WTC11 (cell line): ENCODE measurements at regions of chr14 and their contacts with region 1.

Region 1: GRCh38 chr14:67571272-67571850 is 28.7 kb downstream of the PIGH start:
- DNase-seq: peak; percentile 72
- ATAC-seq: peak; percentile 85
- H3K4me3 Mint-ChIP-seq: no peak overlapping the region
- H3K27ac Mint-ChIP-seq: no peak overlapping the region
- H3K4me1 Mint-ChIP-seq: peaks cover 9% of the 10 kb centered on the region
- H3K27me3 Mint-ChIP-seq: no peaks in the 10 kb centered on the region
- CTCF ChIP-seq: peak; percentile 85

Region 2: DNA sequence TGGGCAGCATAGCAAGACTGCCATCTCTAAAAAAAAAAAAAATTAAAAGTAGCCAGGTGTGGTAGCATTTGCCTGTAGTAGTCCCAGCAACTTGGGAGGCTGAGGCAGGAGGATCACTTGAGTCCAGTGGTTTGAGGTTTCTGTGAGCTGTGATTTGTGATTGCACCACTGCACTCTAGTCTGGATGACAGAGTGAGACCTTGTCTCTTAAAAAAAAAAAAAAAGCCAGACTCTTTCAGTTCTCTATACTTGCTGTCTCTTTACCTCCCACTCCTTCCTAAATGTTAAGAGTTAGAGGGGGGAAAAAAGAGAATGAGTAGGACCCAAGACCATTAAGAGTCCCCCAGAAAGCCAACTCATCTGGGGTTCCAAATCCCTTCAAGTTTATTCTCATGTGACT is 193.4 kb before region 1 on chr14:
- CTCF ChIA-PET with region 1: no interaction called
- POLR2A ChIA-PET with region 1: no interaction called
- DNase-seq: no peak
- ATAC-seq: no peak
- H3K4me3 Mint-ChIP-seq: no peak overlapping the region
- H3K27ac Mint-ChIP-seq: no peak overlapping the region
- H3K4me1 Mint-ChIP-seq: no peaks in the 10 kb centered on the region
- H3K27me3 Mint-ChIP-seq: no peaks in the 10 kb centered on the region
- CTCF ChIP-seq: no peak

Region 3: GRCh38 chr14:67420102-67420830 is 151.1 kb before region 1 on chr14:
- CTCF ChIA-PET with region 1: interaction called, 30 read pairs
- POLR2A ChIA-PET with region 1: no interaction called
- DNase-seq: peak; percentile 85
- ATAC-seq: peak; percentile 93
- H3K4me3 Mint-ChIP-seq: no peak overlapping the region
- H3K27ac Mint-ChIP-seq: no peak overlapping the region
- H3K4me1 Mint-ChIP-seq: no peaks in the 10 kb centered on the region
- H3K27me3 Mint-ChIP-seq: no peaks in the 10 kb centered on the region; the same call in 1 of the 2 replicates
- CTCF ChIP-seq: peak; percentile 62; the same call in 1 of the 2 replicates

Region 4: GRCh38 chr14:67514650-67515385 is 56.5 kb before region 1 on chr14:
- CTCF ChIA-PET with region 1: interaction called, 27 read pairs
- POLR2A ChIA-PET with region 1: interaction called, 3 read pairs
- DNase-seq: peak; percentile 32
- ATAC-seq: peak; percentile 57
- H3K4me3 Mint-ChIP-seq: peak overlapping the region; percentile 80
- H3K27ac Mint-ChIP-seq: no peak overlapping the region
- H3K4me1 Mint-ChIP-seq: peaks cover 21% of the 10 kb centered on the region
- H3K27me3 Mint-ChIP-seq: peaks cover 77% of the 10 kb centered on the region
- CTCF ChIP-seq: no peak

Region 5: GRCh38 chr14:67541448-67542387 is 29.6 kb before region 1 on chr14:
- CTCF ChIA-PET with region 1: interaction called, 36 read pairs
- POLR2A ChIA-PET with region 1: interaction called, 6 read pairs
- DNase-seq: peak; percentile 67
- ATAC-seq: peak; percentile 91
- H3K4me3 Mint-ChIP-seq: peak overlapping the region; percentile 63
- H3K27ac Mint-ChIP-seq: peak overlapping the region; percentile 99
- H3K4me1 Mint-ChIP-seq: peaks cover 50% of the 10 kb centered on the region
- H3K27me3 Mint-ChIP-seq: no peaks in the 10 kb centered on the region
- CTCF ChIP-seq: no peak

Region 6: GRCh38 chr14:67557126-67557525 is 14.2 kb before region 1 on chr14:
- CTCF ChIA-PET with region 1: interaction called, 27 read pairs
- POLR2A ChIA-PET with region 1: no interaction called
- DNase-seq: no peak
- ATAC-seq: no peak; the same call in 1 of the 2 replicates
- H3K4me3 Mint-ChIP-seq: no peak overlapping the region
- H3K27ac Mint-ChIP-seq: peak overlapping the region; percentile 55; the same call in 1 of the 2 replicates
- H3K4me1 Mint-ChIP-seq: peaks cover 10% of the 10 kb centered on the region
- H3K27me3 Mint-ChIP-seq: no peaks in the 10 kb centered on the region
- CTCF ChIP-seq: no peak

Region 7: DNA sequence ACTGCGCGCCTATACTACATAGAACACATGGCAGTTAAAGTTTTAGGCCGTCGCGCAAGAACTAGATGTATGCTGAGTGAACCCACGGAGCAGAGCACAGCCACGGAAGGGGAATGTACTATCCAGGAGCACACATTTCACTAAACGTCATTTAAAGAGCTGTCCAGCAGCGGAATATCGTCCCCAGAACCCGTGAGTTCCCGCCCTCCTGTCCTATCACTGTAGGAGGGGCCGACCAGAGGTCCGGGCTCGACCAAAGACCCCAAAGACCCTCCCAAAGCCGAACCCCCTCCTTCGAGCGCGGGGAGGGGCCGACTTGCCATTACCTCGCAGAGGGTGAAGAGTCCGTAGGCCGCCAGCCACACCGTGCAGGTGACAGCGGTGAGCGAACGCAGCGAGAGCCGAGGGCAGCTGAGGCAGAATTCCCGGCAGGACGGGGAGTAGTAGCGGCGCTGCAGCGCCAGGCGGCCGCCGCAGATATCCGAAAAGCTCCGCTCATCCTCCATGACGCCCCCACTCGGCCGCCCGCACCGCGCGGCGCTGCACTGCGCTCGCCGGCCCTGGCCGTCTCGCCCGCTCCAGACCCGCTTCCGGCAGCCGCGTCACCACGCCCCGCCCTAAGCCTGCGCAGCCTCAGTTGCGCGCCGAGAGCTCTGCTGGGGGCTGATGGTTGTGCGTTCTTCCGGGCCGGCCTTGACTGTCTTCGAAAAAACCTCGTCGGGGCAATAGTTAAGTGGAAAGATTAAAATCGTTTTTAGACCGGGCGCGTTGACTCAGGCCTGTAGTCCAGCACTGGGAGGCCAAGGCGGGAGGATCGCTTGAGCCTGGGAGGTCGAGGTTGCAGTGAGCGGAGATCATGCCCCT is 28.6 kb after region 1 on chr14 and contains the start of gene PIGH:
- CTCF ChIA-PET with region 1: interaction called, 18 read pairs
- POLR2A ChIA-PET with region 1: no interaction called
- DNase-seq: peak; percentile 92
- ATAC-seq: peak; percentile 97
- H3K4me3 Mint-ChIP-seq: peak within 1 kb of the TSS; percentile 90
- H3K27ac Mint-ChIP-seq: peak within 1 kb of the TSS; percentile 88
- H3K4me1 Mint-ChIP-seq: peaks cover 8% of the 10 kb centered on the region
- H3K27me3 Mint-ChIP-seq: peaks cover 56% of the 10 kb centered on the region
- CTCF ChIP-seq: 0 out of 2 replicates have a peak, but pooled peaks have one; percentile 22
- total RNA-seq, gene PIGH: 6.6 to 7.8 TPM (median 6.8 TPM) in 3 replicates

Region 8: DNA sequence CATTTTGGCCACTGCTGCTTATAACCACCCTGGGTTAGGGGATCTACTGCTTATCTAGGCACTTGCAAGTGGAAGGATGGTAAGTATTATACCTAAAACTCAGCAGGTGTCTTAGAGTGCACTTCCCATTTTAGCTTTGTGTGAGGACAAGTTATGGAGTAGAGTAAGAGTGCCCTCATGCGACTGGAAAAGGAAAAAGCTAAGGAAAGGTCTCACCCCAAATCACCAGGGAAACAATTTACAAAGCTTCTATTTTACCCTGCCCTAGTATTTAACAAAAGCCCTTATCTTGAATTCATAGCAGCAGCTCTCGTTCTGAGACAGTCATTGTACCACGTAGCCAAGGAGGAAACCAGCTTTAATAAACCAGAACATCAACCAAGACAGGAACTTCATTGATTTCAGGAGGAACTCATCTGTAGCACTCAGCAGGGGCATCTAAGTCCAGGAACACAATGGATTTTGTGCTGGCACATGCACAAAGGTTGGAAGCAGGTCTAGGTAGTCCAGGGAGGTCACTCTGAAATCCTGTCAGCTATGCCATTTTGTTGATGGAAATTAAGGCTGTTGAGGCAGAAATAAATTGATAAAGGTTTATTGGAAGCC is 133.2 kb after region 1 on chr14:
- CTCF ChIA-PET with region 1: interaction called, 23 read pairs
- POLR2A ChIA-PET with region 1: no interaction called
- DNase-seq: no peak
- ATAC-seq: peak; percentile 94
- H3K4me3 Mint-ChIP-seq: no peak overlapping the region
- H3K27ac Mint-ChIP-seq: no peak overlapping the region
- H3K4me1 Mint-ChIP-seq: 0 out of 2 replicates have a peak, but pooled peaks cover 3% of the 10 kb centered on the region
- H3K27me3 Mint-ChIP-seq: no peaks in the 10 kb centered on the region
- CTCF ChIP-seq: no peak

Region 9: DNA sequence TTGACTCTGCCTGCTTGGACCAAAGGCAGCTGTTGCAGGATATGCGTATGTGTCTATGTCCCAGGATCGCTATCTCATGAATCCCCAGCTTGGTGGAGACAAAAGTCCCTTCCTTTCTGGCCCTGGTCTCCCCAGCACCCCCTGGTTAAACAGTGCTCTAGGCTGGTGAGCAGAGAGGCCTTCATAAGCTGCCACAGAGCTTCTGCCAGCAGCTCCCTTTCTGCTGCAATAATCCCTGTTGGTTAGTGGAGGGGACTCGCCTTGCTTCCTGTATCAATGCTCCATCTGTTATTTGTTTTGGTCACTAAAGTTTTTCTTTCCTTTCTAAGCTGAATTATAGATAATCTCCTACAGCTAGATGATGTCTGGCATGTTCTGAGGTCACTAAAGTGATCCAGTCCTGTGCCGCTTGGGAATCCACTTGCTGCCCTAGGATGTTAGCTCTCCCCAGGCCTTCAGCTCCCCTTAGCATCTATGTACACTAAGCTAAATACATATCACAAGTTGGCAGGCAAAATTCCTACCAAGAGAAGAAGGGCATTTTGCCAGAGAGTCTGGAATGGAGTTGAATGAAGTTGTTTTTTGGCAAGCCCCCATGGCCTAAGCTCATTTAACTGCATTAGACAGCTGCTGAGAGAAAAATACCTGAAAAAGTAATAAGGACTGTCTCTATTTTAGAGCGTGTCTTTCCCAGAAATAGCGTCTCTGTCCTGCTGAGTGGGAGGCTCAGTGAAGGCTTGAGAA is 178.2 kb after region 1 on chr14:
- CTCF ChIA-PET with region 1: no interaction called
- POLR2A ChIA-PET with region 1: no interaction called
- DNase-seq: no peak
- ATAC-seq: no peak
- H3K4me3 Mint-ChIP-seq: no peak overlapping the region
- H3K27ac Mint-ChIP-seq: no peak overlapping the region
- H3K4me1 Mint-ChIP-seq: no peaks in the 10 kb centered on the region
- H3K27me3 Mint-ChIP-seq: no peaks in the 10 kb centered on the region
- CTCF ChIP-seq: no peak